Activated CD4-positive, alpha-beta memory T cell treated with anti-CD3 and anti-CD28 coated beads for 36 hours (primary cell): ENCODE measurements at regions of chr3 and their contacts with region 1.

Region 1: GRCh38 chr3:184135149-184135910 is at the start of gene EIF2B5:
- DNase-seq: peak; percentile 94
- H3K4me3 Mint-ChIP-seq: peak within 1 kb of the TSS; percentile 96
- H3K27ac Mint-ChIP-seq: peak within 1 kb of the TSS; percentile 91
- H3K4me1 Mint-ChIP-seq: peaks cover 35% of the 10 kb centered on the region
- H3K27me3 Mint-ChIP-seq: no peaks in the 10 kb centered on the region
- total RNA-seq, gene EIF2B5: 49.6 to 51.5 TPM

Region 2: GRCh38 chr3:183265834-183266417 is 869.4 kb before region 1 on chr3:
- CTCF ChIA-PET with region 1: no interaction called
- POLR2A ChIA-PET with region 1: no interaction called
- intact Hi-C with region 1: no loop called
- DNase-seq: peak; percentile 71
- H3K4me3 Mint-ChIP-seq: peak overlapping the region; percentile 25
- H3K27ac Mint-ChIP-seq: no peak overlapping the region
- H3K4me1 Mint-ChIP-seq: peaks cover 1% of the 10 kb centered on the region
- H3K27me3 Mint-ChIP-seq: no peaks in the 10 kb centered on the region

Region 3: DNA sequence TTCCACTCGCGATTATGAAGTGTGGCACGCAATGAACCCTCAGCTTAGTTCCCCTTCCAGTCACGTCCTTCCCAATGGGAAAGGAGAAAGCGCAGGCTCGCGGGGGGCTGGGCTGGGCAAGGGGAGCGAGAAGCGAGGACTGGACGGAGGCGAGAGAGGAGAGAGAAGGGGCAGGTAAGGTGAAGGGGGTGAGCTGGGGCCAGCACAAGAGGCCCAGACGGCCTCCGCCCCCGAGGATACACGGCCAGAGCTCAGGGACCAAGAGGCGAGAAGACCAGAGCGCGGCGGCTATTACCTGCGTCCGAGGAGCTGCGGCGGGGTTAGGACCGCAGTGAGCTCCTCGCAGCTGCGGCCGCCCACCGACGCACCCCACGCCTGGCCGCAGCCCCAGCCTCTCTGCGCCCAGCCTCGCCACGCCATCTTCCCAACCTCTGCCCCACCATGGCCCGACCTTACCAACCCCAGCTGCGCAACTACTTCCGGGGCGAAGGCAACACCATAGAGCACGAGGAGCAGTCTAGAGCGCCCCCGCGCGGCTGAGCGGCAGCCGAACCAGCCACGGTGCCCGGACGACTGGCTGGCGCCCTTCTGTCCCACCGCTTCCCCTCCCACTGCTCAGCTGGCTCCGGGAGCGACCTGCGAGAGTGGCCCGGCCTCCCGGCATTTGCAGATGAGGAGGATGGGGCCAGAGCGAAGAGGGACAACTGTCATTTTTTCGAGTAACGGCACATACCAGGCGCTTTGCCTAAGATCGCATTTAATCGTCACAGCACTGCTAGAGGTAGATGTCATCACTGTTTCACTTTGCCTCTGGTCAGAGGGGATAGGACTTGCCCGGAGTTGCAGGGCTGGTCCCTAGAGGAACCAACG is 250.7 kb before region 1 on chr3 and contains the start of gene PARL:
- CTCF ChIA-PET with region 1: interaction called, 4 read pairs
- POLR2A ChIA-PET with region 1: interaction called, 13 read pairs
- intact Hi-C with region 1: no loop called
- DNase-seq: peak; percentile 98
- H3K4me3 Mint-ChIP-seq: peak within 1 kb of the TSS; percentile 92
- H3K27ac Mint-ChIP-seq: peak within 1 kb of the TSS; percentile 86
- H3K4me1 Mint-ChIP-seq: peaks cover 31% of the 10 kb centered on the region
- H3K27me3 Mint-ChIP-seq: no peaks in the 10 kb centered on the region
- total RNA-seq, gene PARL: 77.1 to 84.1 TPM

Region 4: DNA sequence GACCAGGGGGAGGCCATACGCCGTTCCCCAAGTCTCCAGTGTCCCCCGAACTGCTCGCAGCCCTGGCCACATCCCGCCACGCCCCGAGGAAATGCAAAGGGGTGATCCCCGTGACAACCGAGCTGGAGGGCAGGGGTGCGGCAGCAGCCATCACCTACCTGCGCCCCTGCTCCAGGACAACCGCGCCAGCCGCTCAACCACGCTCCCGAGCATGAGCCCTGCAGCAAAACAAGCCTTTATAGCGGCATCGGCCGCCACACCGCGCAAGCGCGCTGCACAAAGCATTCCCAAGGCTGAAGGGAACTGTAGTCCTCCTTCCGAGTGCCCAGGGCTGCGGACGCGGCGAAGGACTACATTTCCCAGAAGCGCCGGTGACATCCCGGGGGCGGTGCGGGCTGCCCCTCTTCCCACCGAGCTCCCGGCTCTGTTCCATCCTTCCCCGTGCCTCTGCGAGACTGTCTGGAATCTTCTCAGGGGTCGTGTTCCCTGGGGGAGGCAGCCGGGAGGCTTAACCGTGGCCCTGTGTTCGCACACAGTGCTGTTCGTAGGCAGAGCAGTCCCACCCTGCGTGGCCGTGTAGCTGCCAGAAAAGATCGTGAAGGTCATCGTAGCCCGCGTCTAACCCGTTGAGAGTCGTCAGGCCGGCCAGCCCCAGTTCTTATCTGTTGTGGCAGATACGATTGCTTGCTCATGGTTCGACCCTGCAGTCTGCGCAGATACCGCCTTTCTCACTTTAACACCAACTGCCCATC is 117.5 kb before region 1 on chr3 and contains the start of gene ABCC5:
- CTCF ChIA-PET with region 1: interaction called, 7 read pairs
- POLR2A ChIA-PET with region 1: no interaction called
- intact Hi-C with region 1: loop called (anchors 1 kb)
- DNase-seq: peak; percentile 89
- H3K4me3 Mint-ChIP-seq: peak within 1 kb of the TSS; percentile 99
- H3K27ac Mint-ChIP-seq: peak within 1 kb of the TSS; percentile 85
- H3K4me1 Mint-ChIP-seq: peaks cover 23% of the 10 kb centered on the region
- H3K27me3 Mint-ChIP-seq: peaks cover 5% of the 10 kb centered on the region
- total RNA-seq, gene ABCC5: 13.3 to 15.6 TPM

Region 5: DNA sequence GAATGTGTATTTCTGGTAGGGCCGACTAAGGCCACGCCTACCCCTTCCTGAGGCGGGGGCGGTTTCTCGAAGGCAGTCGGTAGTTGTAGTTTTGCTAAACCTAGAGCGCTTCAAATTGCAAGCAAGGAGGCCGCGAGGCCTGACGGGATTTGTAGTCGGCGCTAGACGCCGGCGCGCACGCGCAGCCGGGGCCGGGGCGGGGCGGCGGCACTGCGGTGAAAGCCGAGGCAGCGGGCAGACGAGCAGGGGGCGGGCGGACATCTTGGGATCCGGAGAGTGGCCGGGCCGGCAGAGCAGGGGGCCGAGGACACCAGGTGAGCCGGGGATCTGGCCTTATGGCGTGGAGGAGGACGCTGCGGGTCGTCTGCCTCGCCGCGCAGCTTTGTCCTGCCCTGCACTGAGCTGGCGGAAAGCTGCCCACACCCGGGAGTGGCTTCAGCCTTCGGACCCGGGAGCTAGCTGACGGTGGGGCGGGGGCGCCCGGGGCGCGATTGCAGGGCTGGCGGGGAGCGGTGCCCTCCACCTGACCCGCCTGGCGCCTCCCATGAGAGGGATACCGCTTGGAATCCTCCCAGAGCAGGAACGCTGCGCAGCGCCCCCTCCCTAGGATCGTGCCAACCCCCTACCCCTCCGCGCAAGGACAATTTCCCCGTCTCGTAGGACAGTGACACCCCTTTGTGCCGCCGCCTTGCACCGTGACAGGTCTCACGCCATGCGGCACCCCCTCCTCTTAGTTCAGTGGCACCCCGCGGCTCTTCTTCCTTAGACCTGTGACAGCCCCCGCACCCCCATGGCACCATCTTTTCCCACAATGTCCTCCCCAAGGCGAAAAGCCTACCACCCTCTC is 39.5 kb after region 1 on chr3 and contains the start of gene AP2M1:
- CTCF ChIA-PET with region 1: interaction called, 3 read pairs
- POLR2A ChIA-PET with region 1: no interaction called
- intact Hi-C with region 1: loop called (anchors 1 kb)
- DNase-seq: peak; percentile 99
- H3K4me3 Mint-ChIP-seq: peak within 1 kb of the TSS; percentile 98
- H3K27ac Mint-ChIP-seq: peak within 1 kb of the TSS; percentile 67
- H3K4me1 Mint-ChIP-seq: peaks cover 25% of the 10 kb centered on the region
- H3K27me3 Mint-ChIP-seq: no peaks in the 10 kb centered on the region
- total RNA-seq, gene AP2M1: 218 to 221 TPM

Region 6: GRCh38 chr3:184362668-184363540 is 227.6 kb after region 1 on chr3:
- CTCF ChIA-PET with region 1: no interaction called
- POLR2A ChIA-PET with region 1: no interaction called
- intact Hi-C with region 1: loop called (anchors 1 kb)
- DNase-seq: peak; percentile 98
- H3K4me3 Mint-ChIP-seq: peak overlapping the region; percentile 96
- H3K27ac Mint-ChIP-seq: peak overlapping the region; percentile 94
- H3K4me1 Mint-ChIP-seq: peaks cover 30% of the 10 kb centered on the region
- H3K27me3 Mint-ChIP-seq: no peaks in the 10 kb centered on the region